ENCODE measurements at regions of chr11 and their contacts with region 1.

Region 1: DNA sequence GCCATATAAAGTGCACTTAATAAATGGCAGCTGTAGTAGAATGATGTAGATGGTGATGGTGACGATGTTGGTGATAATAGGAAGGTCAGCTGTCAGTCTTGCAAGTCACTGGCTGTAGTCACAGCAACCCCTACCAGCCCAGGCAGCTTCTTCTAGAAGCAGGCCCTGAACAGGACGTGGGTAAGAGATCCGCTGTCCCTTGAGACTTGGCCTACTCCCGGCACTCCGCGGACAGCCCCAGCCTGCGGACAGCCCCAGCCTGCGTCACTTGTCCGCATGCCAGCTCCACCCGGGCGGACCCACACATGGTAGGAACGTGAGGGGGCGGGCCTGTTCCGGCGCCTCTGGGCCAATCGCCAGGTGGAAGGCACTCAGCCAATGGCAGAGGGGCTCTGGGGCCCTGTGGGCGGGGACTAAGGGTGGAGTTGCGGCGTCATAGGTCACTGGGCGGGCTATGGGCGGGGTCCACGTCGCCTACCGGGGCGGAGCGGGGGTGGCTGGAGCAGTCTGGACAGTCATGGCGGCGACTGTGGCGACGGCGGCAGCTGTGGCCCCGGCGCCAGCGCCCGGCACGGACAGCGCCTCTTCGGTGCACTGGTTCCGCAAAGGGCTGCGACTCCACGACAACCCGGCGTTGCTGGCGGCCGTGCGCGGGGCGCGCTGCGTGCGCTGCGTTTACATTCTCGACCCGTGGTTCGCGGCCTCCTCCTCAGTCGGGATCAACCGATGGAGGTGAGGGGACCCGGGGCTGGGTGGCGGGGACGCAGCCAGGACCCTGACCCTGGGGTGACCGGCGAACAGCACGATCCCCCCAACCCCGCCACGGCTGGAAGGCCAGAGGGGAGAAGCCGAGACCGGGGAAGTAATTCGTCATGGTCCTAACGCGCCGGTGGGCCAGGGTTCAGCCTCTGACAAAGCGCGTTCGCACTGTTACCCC is at the start of gene CRY2:
- DNase-seq: peak; percentile 99
- H3K4me3 Mint-ChIP-seq: peak within 1 kb of the TSS; percentile 78
- H3K27ac Mint-ChIP-seq: peak within 1 kb of the TSS; percentile 63
- H3K4me1 Mint-ChIP-seq: peaks cover 45% of the 10 kb centered on the region
- H3K27me3 Mint-ChIP-seq: no peaks in the 10 kb centered on the region
- total RNA-seq, gene CRY2: 13.9 to 16.2 TPM

Region 2: GRCh38 chr11:45079943-45080719 is 767.1 kb before region 1 on chr11:
- CTCF ChIA-PET with region 1: no interaction called
- intact Hi-C with region 1: no loop called
- DNase-seq: peak; percentile 82
- H3K4me3 Mint-ChIP-seq: peak overlapping the region; percentile 33
- H3K27ac Mint-ChIP-seq: peak overlapping the region; percentile 86
- H3K4me1 Mint-ChIP-seq: peaks cover 40% of the 10 kb centered on the region
- H3K27me3 Mint-ChIP-seq: no peaks in the 10 kb centered on the region

Region 3: DNA sequence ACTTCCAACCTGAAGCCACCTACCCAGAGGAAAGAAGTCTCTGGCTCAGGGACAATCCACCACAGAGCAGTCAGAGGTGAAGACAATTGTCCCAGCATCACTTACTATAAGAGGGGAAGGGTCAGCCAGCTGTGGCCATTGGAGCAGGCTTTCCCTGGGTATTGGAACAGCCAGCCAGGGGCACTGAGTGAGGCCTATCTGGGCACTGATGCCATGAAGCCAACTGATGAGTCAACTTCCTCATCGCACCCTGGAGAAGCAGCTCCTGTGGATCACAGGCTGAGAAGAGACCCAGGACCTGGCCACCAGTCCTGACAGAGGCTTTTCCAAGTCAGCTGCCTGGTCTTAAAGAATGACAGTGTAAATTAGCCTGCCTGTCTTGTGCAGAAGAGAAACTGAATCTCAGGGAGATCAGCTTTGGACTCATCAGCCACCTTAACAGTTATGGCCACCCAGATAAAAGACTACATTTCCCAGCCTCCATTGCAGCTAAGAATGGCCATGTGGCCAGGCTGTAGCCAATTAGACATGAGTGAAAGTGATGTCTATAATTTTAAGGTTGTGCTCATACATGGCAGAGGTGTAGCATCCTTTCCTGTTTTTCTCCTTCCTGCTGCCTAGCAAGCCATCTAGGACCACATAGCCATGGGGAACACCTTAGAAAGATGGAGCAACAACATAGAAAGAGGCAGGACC is 200.8 kb before region 1 on chr11:
- CTCF ChIA-PET with region 1: no interaction called
- intact Hi-C with region 1: no loop called
- DNase-seq: no peak
- H3K4me3 Mint-ChIP-seq: no peak overlapping the region
- H3K27ac Mint-ChIP-seq: no peak overlapping the region
- H3K4me1 Mint-ChIP-seq: no peaks in the 10 kb centered on the region
- H3K27me3 Mint-ChIP-seq: peaks cover 20% of the 10 kb centered on the region

Region 4: DNA sequence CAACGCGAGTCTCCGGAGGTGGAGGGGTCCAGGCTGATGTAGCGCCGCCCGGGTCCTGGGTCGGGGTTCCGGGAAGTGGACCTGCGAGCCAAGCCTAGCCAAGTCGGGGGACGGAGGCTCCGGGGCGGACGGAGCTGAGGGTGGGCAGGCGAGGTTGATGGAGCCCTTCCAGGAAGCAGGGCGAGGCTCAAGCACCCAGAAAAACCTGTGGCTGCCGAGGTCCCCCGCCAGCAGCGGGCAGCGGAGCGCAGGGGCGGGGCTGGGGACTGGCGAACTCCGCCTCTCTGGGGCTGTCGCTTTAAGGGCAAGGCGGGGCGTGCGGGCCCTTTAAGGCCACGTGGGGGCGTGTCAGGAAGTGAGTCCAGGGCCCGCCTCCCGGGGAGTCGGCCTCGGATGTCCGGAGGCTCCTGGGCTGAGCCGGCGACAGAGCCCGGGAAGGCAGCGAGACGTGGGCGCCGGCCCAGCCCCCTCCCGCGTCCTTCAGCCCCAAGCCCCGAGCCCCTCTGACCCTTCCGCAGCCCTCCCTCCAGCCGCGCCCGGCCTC is 42.4 kb before region 1 on chr11 and contains the start of gene SLC35C1:
- CTCF ChIA-PET with region 1: interaction called, 7 read pairs
- intact Hi-C with region 1: loop called (anchors 1 kb)
- DNase-seq: peak; percentile 97
- H3K4me3 Mint-ChIP-seq: peak within 1 kb of the TSS; percentile 90
- H3K27ac Mint-ChIP-seq: peak within 1 kb of the TSS; percentile 81
- H3K4me1 Mint-ChIP-seq: peaks cover 36% of the 10 kb centered on the region
- H3K27me3 Mint-ChIP-seq: no peaks in the 10 kb centered on the region
- total RNA-seq, gene SLC35C1: 5.6 to 6.5 TPM

Region 5: GRCh38 chr11:45834298-45834756 is 12.9 kb before region 1 on chr11:
- CTCF ChIA-PET with region 1: interaction called, 13 read pairs
- intact Hi-C with region 1: no loop called
- DNase-seq: no peak
- H3K4me3 Mint-ChIP-seq: no peak overlapping the region
- H3K27ac Mint-ChIP-seq: peak overlapping the region; percentile 20
- H3K4me1 Mint-ChIP-seq: peaks cover 11% of the 10 kb centered on the region
- H3K27me3 Mint-ChIP-seq: no peaks in the 10 kb centered on the region

Region 6: GRCh38 chr11:45885274-45885920 is 38.2 kb after region 1 on chr11 and contains the start of gene MAPK8IP1:
- CTCF ChIA-PET with region 1: interaction called, 3 read pairs
- intact Hi-C with region 1: loop called (anchors 1 kb)
- DNase-seq: peak; percentile 40
- H3K4me3 Mint-ChIP-seq: peak within 1 kb of the TSS; percentile 56
- H3K27ac Mint-ChIP-seq: no peak within 1 kb of the TSS
- H3K4me1 Mint-ChIP-seq: peaks cover 6% of the 10 kb centered on the region
- H3K27me3 Mint-ChIP-seq: peaks cover under 1% of the 10 kb centered on the region
- total RNA-seq, gene MAPK8IP1: 0.22 to 0.57 TPM

Region 7: GRCh38 chr11:45917623-45918330 is 70.5 kb after region 1 on chr11 and contains the start of gene PEX16:
- CTCF ChIA-PET with region 1: interaction called, 3 read pairs
- intact Hi-C with region 1: loop called (anchors 1 kb)
- DNase-seq: peak; percentile 96
- H3K4me3 Mint-ChIP-seq: peak within 1 kb of the TSS; percentile 88
- H3K27ac Mint-ChIP-seq: peak within 1 kb of the TSS; percentile 96
- H3K4me1 Mint-ChIP-seq: peaks cover 24% of the 10 kb centered on the region
- H3K27me3 Mint-ChIP-seq: peaks cover 3% of the 10 kb centered on the region
- total RNA-seq, gene PEX16: 28.6 to 32.5 TPM

Region 8: GRCh38 chr11:46006418-46007070 is 159.3 kb after region 1 on chr11:
- CTCF ChIA-PET with region 1: interaction called, 9 read pairs
- intact Hi-C with region 1: loop called (anchors 1 kb)
- DNase-seq: peak; percentile 14
- H3K4me3 Mint-ChIP-seq: no peak overlapping the region
- H3K27ac Mint-ChIP-seq: no peak overlapping the region
- H3K4me1 Mint-ChIP-seq: no peaks in the 10 kb centered on the region
- H3K27me3 Mint-ChIP-seq: no peaks in the 10 kb centered on the region